Cardiac septum (tissue), 1 donor: ENCODE measurements at regions of chr18 and their contacts with region 1.

Region 1: DNA sequence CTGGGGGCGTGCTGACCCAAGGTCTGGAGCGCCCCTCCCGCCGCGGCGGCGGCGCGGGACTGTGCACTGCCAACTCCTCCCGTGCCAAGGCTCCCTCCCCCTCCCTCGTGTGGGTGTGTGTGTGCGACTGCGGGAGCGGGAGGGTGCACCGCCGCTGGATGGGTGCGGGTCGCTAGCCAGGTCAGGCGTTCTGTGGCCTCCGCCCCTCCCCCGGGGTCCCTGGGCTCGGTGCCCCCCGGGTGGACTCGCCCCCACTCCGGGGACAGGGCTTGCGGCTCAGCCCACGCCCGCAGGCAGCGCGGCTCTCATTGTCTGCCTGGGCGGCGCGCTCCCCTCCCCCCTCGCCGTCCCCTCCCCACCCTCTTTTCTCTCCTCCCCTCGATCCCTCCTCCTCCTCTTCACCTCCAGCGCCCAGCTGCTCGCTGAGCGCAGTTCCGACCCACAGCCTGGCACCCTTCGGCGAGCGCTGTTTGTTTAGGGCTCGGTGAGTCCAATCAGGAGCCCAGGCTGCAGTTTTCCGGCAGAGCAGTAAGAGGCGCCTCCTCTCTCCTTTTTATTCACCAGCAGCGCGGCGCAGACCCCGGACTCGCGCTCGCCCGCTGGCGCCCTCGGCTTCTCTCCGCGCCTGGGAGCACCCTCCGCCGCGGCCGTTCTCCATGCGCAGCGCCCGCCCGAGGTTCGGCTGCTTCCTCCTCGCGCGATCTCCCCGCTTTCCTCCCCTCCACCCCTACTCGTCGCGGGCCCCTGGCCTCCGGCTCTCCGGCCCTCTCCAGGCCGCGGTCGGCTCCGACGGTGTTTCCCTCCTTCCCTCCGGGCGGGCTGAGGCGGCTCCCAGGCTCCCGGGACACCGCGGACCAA is at the start of gene GATA6:
- DNase-seq: peak; percentile 94
- total RNA-seq, gene GATA6: 76.2 TPM

Region 2: GRCh38 chr18:21826196-21826595 is 343.0 kb before region 1 on chr18:
- intact Hi-C with region 1: loop called (anchors 5 kb)
- DNase-seq: no peak

Region 3: GRCh38 chr18:21997207-21998143 is 171.8 kb before region 1 on chr18:
- intact Hi-C with region 1: loop called (anchors 2 kb)
- DNase-seq: no peak

Region 4: DNA sequence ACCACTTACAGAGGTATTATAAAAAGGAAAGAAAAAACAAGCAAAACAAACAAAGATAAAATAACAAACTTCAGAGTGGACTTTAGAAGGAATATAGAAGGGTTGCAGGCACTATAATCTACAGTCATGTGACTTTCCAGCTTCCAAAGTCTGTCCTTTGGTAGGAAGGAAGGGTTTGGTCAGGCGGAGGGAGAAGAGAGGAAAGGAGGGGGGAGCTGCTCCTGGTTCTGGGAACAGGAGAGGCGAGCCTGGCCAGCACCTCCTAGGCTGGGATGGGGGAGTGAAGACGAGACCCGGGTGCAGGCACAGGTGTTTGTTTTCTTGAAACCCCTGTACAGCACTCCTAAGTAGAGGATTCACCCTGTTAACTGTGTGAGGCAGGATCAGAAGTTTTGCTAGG is 53.7 kb before region 1 on chr18:
- intact Hi-C with region 1: loop called (anchors 5 kb)
- DNase-seq: no peak

Region 5: GRCh38 chr18:22279741-22280452 is 110.7 kb after region 1 on chr18:
- intact Hi-C with region 1: loop called (anchors 5 kb)
- DNase-seq: no peak

Region 6: DNA sequence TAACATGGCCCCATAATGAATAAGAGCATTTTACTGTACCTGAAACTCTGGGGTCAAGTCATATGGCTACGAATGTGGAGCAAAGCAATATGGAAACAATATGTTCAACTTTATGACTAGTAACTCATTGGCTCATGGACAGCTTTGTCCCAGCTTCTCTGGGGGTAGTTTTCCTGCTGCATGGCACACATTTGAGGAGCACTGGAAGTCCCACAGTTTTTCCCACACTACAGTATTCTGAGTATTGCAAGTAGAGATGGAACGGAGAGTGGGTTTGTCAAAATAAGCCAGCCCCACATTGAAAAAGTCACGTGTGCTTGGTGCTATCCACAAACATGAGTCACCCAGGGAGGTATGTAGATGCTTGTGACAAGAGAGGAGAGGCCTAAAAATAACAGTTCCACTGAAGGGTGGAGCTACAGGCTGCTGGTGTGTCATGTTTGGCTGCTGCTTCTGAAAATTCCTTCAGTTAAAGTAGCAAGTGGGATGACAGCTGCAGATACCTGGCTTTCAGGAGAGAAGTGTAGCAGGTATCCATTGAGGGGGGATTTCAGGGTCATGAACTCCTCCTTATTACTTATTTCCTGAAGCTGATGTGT is 296.7 kb after region 1 on chr18:
- intact Hi-C with region 1: loop called (anchors 2 kb)
- DNase-seq: no peak